Head of caudate nucleus (tissue), 42 donors: ENCODE measurements at regions of chr6 and their contacts with region 1.

Region 1: DNA sequence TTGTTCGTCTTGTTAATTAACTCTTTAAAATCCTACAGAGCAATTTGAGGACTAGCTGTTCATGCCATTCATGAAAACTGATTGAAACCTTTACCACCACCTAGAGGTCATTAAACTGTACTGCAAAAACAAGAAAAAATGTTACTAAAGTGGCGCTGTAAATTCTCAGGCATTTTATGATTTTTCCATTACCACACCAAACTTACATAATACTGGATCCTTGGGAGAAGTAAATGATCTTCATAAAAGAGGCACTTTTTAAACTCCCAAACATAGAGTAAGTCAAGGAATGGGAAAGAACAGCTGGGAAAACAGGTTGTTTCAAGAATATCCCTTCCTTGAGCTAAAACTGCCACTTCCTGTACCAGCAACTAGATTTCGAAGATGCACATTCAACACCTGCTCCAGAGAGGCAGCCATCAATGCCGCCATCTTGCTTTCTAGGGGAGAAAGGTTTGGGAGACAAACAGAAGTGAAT is 54.3 kb downstream of the MYLIP start:
- DNase-seq: no peak

Region 2: GRCh38 chr6:15672291-15672690 is 510.9 kb before region 1 on chr6:
- intact Hi-C with region 1: no loop called
- DNase-seq: no peak

Region 3: GRCh38 chr6:16105854-16106253 is 77.4 kb before region 1 on chr6:
- intact Hi-C with region 1: no loop called
- DNase-seq: no peak

Region 4: GRCh38 chr6:16128759-16129622 is 54.2 kb before region 1 on chr6 and contains the start of gene MYLIP:
- intact Hi-C with region 1: loop called (anchors 10 kb)
- DNase-seq: peak; percentile 96 to 100 (median 99)

Region 5: GRCh38 chr6:16319813-16320532 is 136.7 kb after region 1 on chr6:
- intact Hi-C with region 1: no loop called
- DNase-seq: peak; percentile 60 to 94 (median 77)